CD8-positive, alpha-beta T cell (primary cell): ENCODE measurements at regions of chr12 and their contacts with region 1.

Region 1: GRCh38 chr12:62435303-62436163 is 31.1 kb upstream of the MON2 start:
- DNase-seq: peak in 7 of 9 experiments; percentile 17 to 60 (median 34)
- ATAC-seq: peak; percentile 72
- H3K4me3 ChIP-seq: peak overlapping the region; percentile 46 to 56
- H3K4me3 Mint-ChIP-seq: peak overlapping the region; percentile 87
- H3K27ac ChIP-seq: no peak overlapping the region
- H3K27ac Mint-ChIP-seq: no peak overlapping the region
- H3K4me1 ChIP-seq: peaks cover 12% of the 10 kb centered on the region
- H3K4me1 Mint-ChIP-seq: peaks cover 17% of the 10 kb centered on the region
- H3K27me3 ChIP-seq: peaks cover 3 to 4% of the 10 kb centered on the region in 2 experiments
- H3K27me3 Mint-ChIP-seq: peaks cover 12% of the 10 kb centered on the region
- CTCF ChIP-seq: no peak

Region 2: DNA sequence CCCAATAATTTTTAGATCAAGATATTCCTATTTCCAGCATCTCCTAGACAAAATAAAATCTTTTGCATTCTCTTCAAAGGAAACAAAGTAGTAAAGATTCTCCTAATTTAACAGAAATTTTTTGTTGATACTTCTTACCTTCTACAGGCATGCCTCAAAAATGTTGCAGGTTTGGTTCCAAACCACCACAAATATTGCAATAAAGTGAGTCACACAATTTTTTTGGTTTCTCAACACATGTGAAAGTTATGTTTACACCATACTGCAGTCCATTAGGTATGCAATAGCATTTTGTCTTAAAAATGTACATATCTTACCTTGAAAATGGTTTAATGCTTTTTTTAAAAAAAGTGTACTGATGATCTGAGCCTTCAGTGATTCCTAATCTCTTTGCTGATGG is 240.9 kb before region 1 on chr12:
- CTCF ChIA-PET with region 1: no interaction called
- POLR2A ChIA-PET with region 1: no interaction called
- intact Hi-C with region 1: no loop called
- DNase-seq: no peak
- ATAC-seq: no peak
- H3K4me3 ChIP-seq: no peak overlapping the region
- H3K4me3 Mint-ChIP-seq: no peak overlapping the region
- H3K27ac ChIP-seq: no peak overlapping the region
- H3K27ac Mint-ChIP-seq: no peak overlapping the region
- H3K4me1 ChIP-seq: peaks cover 21% of the 10 kb centered on the region
- H3K4me1 Mint-ChIP-seq: peaks cover 26% of the 10 kb centered on the region
- H3K27me3 ChIP-seq: peaks cover 13 to 18% of the 10 kb centered on the region in 2 experiments
- H3K27me3 Mint-ChIP-seq: peaks cover 21% of the 10 kb centered on the region
- CTCF ChIP-seq: no peak

Region 3: GRCh38 chr12:62446754-62447452 is 11.4 kb after region 1 on chr12:
- CTCF ChIA-PET with region 1: interaction called, 19 read pairs
- POLR2A ChIA-PET with region 1: no interaction called
- intact Hi-C with region 1: no loop called
- DNase-seq: no peak
- ATAC-seq: no peak
- H3K4me3 ChIP-seq: no peak overlapping the region
- H3K4me3 Mint-ChIP-seq: no peak overlapping the region
- H3K27ac ChIP-seq: no peak overlapping the region
- H3K27ac Mint-ChIP-seq: no peak overlapping the region
- H3K4me1 ChIP-seq: no peaks in the 10 kb centered on the region
- H3K4me1 Mint-ChIP-seq: no peaks in the 10 kb centered on the region
- H3K27me3 ChIP-seq: peaks cover 0 to 2% of the 10 kb centered on the region in 2 experiments
- H3K27me3 Mint-ChIP-seq: peaks cover 5% of the 10 kb centered on the region
- CTCF ChIP-seq: no peak

Region 4: GRCh38 chr12:62522984-62523383 is 87.5 kb after region 1 on chr12:
- CTCF ChIA-PET with region 1: interaction called, 3 read pairs
- POLR2A ChIA-PET with region 1: no interaction called
- intact Hi-C with region 1: loop called in 1 of 2 experiments (anchors 5 kb)
- DNase-seq: peak in 1 of 9 experiments; percentile 14
- ATAC-seq: no peak
- H3K4me3 ChIP-seq: no peak overlapping the region
- H3K4me3 Mint-ChIP-seq: no peak overlapping the region
- H3K27ac ChIP-seq: no peak overlapping the region
- H3K27ac Mint-ChIP-seq: no peak overlapping the region
- H3K4me1 ChIP-seq: peaks cover 4% of the 10 kb centered on the region
- H3K4me1 Mint-ChIP-seq: peaks cover 29% of the 10 kb centered on the region
- H3K27me3 ChIP-seq: no peaks in the 10 kb centered on the region
- H3K27me3 Mint-ChIP-seq: no peaks in the 10 kb centered on the region
- CTCF ChIP-seq: no peak

Region 5: DNA sequence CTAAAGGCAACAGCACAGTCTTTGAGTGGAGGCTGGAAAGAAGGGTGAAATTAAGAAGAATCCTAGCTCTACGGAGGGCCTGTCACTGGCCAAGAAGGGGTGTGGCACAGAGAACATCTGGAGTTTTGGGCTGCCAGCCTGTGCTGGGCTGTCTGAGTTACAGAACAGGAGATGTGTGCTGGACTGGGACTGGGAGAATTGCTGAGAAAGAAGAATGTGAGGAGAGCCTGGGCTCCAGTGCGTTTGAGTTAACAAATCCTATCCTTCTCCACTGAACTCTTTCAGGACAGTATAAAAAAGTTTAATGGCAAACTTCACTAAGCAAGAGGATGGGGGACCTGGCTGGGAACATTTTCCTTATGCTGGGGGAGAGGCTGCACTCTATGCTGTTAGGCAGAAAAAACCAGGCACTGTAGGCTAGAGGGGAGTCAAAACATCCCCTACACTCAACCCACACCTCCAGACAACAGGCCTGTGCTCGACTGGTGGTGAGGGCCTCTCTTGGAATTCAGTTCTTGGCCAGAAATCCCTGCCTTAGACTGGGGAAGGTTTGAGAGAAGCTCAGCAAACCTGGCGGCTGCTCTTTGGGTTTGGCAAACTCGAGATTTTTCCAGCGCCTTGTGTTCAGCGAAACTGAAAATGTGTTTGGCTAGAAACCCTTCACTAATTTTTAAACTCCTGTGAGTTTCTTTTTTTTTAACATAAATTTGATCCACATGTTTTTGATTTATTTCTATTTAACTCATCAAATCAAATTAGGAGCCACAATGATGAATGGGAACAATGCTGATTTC is 248.4 kb after region 1 on chr12:
- CTCF ChIA-PET with region 1: no interaction called
- POLR2A ChIA-PET with region 1: no interaction called
- intact Hi-C with region 1: no loop called
- DNase-seq: no peak
- ATAC-seq: no peak
- H3K4me3 ChIP-seq: no peak overlapping the region
- H3K4me3 Mint-ChIP-seq: no peak overlapping the region
- H3K27ac ChIP-seq: no peak overlapping the region
- H3K27ac Mint-ChIP-seq: no peak overlapping the region
- H3K4me1 ChIP-seq: no peaks in the 10 kb centered on the region
- H3K4me1 Mint-ChIP-seq: no peaks in the 10 kb centered on the region
- H3K27me3 ChIP-seq: no peaks in the 10 kb centered on the region
- H3K27me3 Mint-ChIP-seq: peaks cover 8% of the 10 kb centered on the region
- CTCF ChIP-seq: no peak

Region 6: GRCh38 chr12:62793256-62794217 is 358.0 kb after region 1 on chr12:
- CTCF ChIA-PET with region 1: interaction called, 124 read pairs
- POLR2A ChIA-PET with region 1: interaction called, 4 read pairs
- intact Hi-C with region 1: loop called (anchors 1 kb)
- DNase-seq: peak; percentile 47 to 85 (median 71)
- ATAC-seq: peak; percentile 83
- H3K4me3 ChIP-seq: no peak overlapping the region
- H3K4me3 Mint-ChIP-seq: no peak overlapping the region
- H3K27ac ChIP-seq: no peak overlapping the region
- H3K27ac Mint-ChIP-seq: no peak overlapping the region
- H3K4me1 ChIP-seq: no peaks in the 10 kb centered on the region
- H3K4me1 Mint-ChIP-seq: no peaks in the 10 kb centered on the region
- H3K27me3 ChIP-seq: no peaks in the 10 kb centered on the region
- H3K27me3 Mint-ChIP-seq: peaks cover 3% of the 10 kb centered on the region
- CTCF ChIP-seq: peak; percentile 93

Region 7: DNA sequence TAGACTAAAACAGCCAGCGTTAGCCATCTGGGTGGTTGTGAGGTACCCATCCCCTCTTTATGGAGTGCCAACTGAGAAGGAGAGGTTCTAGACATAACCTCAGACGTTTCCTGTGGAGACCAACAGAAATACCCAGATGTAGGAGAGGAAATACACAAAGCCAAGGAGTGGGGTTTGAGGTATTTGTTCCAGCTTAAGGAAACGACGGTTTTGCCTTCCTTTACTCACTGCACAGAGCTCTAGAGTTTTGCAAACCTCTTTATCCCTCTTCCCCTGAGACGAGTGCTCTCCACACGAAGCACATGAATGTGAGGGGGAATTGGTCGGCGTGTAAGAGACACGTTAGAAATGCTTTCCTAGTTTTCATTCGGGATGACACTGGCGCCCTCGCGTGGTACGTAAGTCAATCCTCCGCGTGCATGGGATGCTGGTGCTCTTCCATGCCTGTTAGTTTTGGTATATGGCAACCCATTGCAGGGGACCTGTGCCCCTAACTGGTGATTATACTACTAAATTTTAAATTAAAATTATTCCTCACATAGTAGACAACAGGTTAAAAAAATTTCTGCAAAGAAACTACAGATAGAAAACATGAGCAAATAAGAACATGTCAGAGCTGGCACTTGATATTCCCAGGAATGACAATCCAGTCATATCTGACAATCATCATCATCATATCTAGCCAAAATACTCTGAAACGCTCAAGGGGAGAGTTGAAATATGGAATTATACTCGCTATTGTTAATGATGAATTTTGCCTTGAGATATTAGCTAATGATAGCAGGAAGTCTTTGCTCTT is 377.7 kb after region 1 on chr12:
- CTCF ChIA-PET with region 1: interaction called, 6 read pairs
- POLR2A ChIA-PET with region 1: no interaction called
- intact Hi-C with region 1: loop called in 1 of 2 experiments (anchors 5 kb)
- DNase-seq: peak in 5 of 9 experiments; percentile 7 to 51 (median 29)
- ATAC-seq: no peak
- H3K4me3 ChIP-seq: peak overlapping the region in 1 of 2 experiments; percentile 20
- H3K4me3 Mint-ChIP-seq: peak overlapping the region; percentile 61
- H3K27ac ChIP-seq: no peak overlapping the region
- H3K27ac Mint-ChIP-seq: no peak overlapping the region
- H3K4me1 ChIP-seq: peaks cover 6% of the 10 kb centered on the region
- H3K4me1 Mint-ChIP-seq: peaks cover 11% of the 10 kb centered on the region
- H3K27me3 ChIP-seq: no peaks in the 10 kb centered on the region
- H3K27me3 Mint-ChIP-seq: peaks cover 22% of the 10 kb centered on the region
- CTCF ChIP-seq: peak; percentile 32